Heart left ventricle (tissue), 16 donors: ENCODE measurements at regions of chr3 and their contacts with region 1.

Region 1: GRCh38 chr3:161914737-161915417 is 418.3 kb downstream of the OTOL1 start:
- DNase-seq: peak in 3 of 5 donors; percentile 8 to 31 (median 22)
- ATAC-seq: peak; percentile 72 to 86 (median 78)
- H3K4me3 ChIP-seq: no peak overlapping the region
- H3K27ac ChIP-seq: no peak overlapping the region
- H3K4me1 ChIP-seq: peaks cover 0 to 6% (median 0%) of the 10 kb centered on the region in 12 donors
- H3K27me3 ChIP-seq: no peaks in the 10 kb centered on the region
- CTCF ChIP-seq: peak; percentile 9 to 69 (median 52)
- POLR2A ChIP-seq: no peak

Region 2: GRCh38 chr3:163622384-163622783 is 1707.5 kb after region 1 on chr3:
- intact Hi-C with region 1: loop called in 1 of 10 experiments (anchors 10 kb)
- DNase-seq: no peak
- ATAC-seq: no peak
- H3K4me3 ChIP-seq: no peak overlapping the region
- H3K27ac ChIP-seq: no peak overlapping the region
- H3K4me1 ChIP-seq: no peaks in the 10 kb centered on the region
- H3K27me3 ChIP-seq: no peaks in the 10 kb centered on the region
- CTCF ChIP-seq: no peak
- POLR2A ChIP-seq: no peak